MCF 10A (cell line): ENCODE measurements at regions of chr17 and their contacts with region 1.

Region 1: DNA sequence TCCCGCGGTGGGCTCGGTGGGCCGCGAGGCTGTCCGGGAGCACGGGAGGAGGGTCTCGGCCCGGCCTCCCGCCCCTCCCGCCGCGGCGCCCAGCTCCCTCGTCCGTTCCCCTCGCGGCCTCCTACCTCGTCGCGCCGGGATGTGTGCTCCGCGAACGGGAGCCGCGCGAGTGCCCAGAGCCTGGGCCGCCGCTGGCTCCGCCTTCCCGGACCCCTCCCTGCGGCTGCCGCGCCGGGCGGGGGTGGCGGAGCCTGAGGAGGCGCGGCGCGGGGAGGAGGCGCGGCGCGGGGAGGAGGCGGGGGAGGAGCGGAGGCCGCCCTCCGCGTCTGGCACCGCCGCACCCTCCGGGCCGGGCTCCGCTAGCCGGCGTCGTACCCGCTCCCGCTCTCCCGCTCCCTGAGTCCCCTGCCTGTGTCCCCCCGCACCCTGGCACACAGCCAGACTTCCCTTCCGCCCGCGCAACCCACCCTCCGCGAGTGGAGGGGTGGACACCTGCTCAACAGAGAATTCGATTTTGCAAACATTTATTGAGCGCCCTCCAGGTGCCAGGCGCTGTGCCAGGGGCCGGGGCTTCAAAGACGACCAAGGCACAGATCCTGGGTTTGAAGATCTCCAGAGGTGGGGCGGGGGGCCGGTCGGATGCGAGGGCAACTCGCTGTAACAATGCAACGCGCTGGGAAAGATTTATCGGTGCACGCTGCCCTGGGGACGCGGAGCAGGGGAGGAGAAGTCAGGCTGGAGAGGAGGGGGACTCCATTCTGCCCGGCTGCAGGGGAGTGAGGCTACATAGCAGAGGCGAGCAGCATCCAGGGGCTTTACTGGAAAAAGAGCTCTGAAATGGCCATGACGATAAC is at the start of gene MPP3:
- DNase-seq: peak; percentile 80
- H3K4me3 Mint-ChIP-seq: peak within 1 kb of the TSS; percentile 77
- H3K27ac Mint-ChIP-seq: no peak within 1 kb of the TSS
- H3K4me1 Mint-ChIP-seq: peaks cover 12% of the 10 kb centered on the region
- H3K27me3 Mint-ChIP-seq: no peaks in the 10 kb centered on the region
- CTCF ChIP-seq: no peak
- total RNA-seq, gene MPP3: 18.7 and 24.5 TPM in 2 replicates

Region 2: GRCh38 chr17:43778337-43779144 is 54.7 kb before region 1 on chr17 and contains the start of gene DUSP3:
- CTCF ChIA-PET with region 1: interaction called, 3 read pairs
- POLR2A ChIA-PET with region 1: interaction called, 7 read pairs
- intact Hi-C with region 1: loop called (anchors 5 kb)
- DNase-seq: peak; percentile 78
- H3K4me3 Mint-ChIP-seq: peak within 1 kb of the TSS; percentile 77
- H3K27ac Mint-ChIP-seq: peak within 1 kb of the TSS; percentile 93
- H3K4me1 Mint-ChIP-seq: no peaks in the 10 kb centered on the region
- H3K27me3 Mint-ChIP-seq: no peaks in the 10 kb centered on the region
- CTCF ChIP-seq: no peak
- total RNA-seq, gene DUSP3: 39.7 and 55.0 TPM in 2 replicates